ENCODE measurements at regions of chr2 and their contacts with region 1.

Region 1: DNA sequence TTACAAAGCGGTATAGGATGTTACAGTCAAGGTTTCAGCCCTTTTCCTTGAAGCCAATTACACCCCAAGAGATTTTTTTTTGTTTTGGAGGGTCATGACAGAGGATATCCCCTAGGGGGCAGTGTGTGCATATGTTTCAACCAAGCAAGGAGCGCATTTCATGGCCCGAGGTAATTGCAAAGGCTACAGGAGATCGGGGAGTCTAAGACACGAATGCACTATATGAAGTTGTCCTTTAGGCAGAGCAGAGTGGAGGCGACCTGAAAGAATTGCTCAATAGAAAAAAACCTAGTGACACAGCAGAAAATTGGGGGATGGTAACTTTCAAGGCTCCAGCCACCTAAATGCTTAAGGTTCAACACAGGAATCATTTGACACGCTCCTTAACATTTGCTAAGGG is 219.8 kb upstream of the PARD3B start:
- DNase-seq: peak; percentile 82
- H3K4me3 ChIP-seq: no peak overlapping the region
- H3K27ac ChIP-seq: no peak overlapping the region
- H3K4me1 ChIP-seq: peaks cover 6% of the 10 kb centered on the region; the same call in 1 of the 2 replicates
- H3K27me3 ChIP-seq: no peaks in the 10 kb centered on the region

Region 2: DNA sequence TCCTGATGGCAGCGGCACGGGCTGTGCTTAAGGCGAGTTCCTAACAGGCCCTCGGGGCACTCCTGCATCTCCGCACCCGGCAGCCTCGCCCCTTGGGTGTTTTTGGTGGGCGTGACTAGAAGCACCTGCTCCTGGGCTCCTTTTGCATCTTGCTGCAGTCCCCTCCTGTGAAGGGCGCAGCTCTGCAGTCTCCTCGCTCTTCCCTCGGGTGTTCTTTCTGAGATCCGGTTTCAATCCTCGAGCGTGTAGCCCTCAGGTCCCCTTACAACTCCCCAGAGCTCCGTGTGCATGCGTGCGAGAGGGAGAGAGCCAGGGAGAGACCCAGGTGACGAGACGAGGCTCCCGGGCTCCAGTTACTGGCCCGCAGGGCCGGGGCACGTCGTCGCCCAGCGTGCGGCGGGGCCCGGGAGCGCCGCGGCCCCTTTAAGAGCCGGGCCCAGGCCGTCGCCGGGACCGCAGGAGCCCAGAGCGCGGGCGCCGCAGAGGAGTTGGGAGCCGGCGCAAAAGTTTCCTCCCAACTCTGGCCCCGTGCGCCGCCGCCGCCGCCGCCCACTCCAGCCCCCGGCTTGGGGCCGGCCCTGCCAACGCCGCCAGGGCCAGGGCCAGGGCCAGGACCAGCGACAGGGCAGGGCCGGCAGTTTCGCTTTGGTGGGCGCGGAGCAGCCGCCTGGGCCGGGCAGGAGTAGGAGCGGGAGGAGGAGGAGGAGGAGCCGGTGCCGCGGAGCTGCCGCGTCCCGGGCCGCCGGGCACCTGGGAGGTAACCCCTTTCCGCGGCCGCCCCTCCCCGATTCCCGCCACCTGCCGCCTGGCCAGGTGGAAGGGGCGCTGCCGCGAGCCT is 219.8 kb after region 1 on chr2 and contains the start of gene PARD3B:
- in situ Hi-C with region 1: loop called (anchors 25 kb)
- DNase-seq: peak; percentile 88
- H3K4me3 ChIP-seq: peak within 1 kb of the TSS; percentile 78
- H3K27ac ChIP-seq: no peak within 1 kb of the TSS
- H3K4me1 ChIP-seq: peaks cover 12% of the 10 kb centered on the region
- H3K27me3 ChIP-seq: no peaks in the 10 kb centered on the region
- total RNA-seq, gene PARD3B: 6.9 and 8.1 TPM in 2 replicates

Region 3: DNA sequence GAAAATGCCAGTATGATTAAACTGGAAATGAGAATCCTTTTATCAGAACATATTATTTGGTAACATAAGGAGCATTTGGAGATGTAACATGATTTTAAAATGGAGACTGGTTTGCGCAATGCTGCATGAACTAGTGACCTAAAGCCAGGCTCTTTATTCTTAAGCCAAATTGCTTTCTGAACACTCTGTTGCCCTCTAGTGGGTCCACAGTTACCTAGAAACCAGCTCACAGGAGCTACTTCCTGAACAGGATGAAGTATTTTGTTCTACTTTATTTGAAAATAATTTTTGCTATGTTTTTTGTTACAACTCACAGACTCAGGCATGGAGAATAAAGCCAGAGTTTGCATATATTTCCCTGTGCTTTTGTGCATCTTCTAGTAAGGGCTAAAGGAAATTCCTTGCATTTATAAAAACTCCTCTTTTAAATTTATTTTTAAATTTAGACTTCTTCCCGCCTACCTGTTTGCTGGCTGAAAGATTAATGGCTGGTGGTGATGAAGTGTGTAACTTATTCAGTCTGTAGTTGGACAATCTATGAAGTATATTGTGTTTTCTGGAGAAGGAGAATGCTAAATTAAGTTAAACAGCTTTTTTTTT is 366.5 kb after region 1 on chr2:
- in situ Hi-C with region 1: loop called (anchors 10 kb)
- DNase-seq: peak; percentile 91
- H3K4me3 ChIP-seq: no peak overlapping the region
- H3K27ac ChIP-seq: no peak overlapping the region
- H3K4me1 ChIP-seq: peaks cover 27% of the 10 kb centered on the region
- H3K27me3 ChIP-seq: no peaks in the 10 kb centered on the region

Region 4: DNA sequence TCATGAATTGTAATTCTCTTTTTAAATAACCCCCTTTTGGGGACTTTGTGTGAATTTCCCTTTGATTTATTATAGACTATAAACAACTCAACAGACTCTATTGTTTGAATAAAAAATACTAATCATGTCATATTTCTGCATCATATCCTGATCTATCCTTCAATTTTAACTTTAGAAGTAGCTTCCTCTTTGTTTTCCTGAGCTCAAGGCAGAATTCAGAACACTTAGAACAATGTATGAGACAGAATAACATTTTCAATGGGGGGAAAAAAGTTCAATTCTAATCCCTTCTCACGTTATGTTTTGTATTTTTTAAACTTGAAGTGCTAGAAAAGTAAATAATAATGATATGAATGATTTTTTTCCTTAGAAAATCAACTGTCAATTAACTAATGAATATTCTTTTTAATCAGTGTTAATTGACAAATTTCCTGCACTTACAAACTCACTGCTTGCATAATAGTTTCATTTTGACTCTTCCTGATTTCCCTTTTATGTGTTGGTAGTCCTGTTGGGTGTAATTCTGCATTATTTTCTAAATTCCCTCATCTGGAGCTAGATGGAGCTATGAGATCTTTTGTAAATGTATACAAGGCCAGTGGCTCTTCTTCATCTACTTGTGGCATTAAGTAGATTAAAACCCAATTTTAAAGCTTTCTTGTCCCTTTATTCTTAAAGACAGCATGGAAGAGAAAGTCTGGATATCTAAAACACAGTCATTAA is 545.9 kb after region 1 on chr2:
- in situ Hi-C with region 1: no loop called
- DNase-seq: peak; percentile 63
- H3K4me3 ChIP-seq: no peak overlapping the region
- H3K27ac ChIP-seq: no peak overlapping the region
- H3K4me1 ChIP-seq: no peaks in the 10 kb centered on the region
- H3K27me3 ChIP-seq: no peaks in the 10 kb centered on the region

Region 5: GRCh38 chr2:205675861-205676516 is 1350.5 kb after region 1 on chr2:
- in situ Hi-C with region 1: loop called (anchors 10 kb)
- DNase-seq: peak; percentile 77
- H3K4me3 ChIP-seq: peak overlapping the region; percentile 51
- H3K27ac ChIP-seq: no peak overlapping the region
- H3K4me1 ChIP-seq: 0 out of 2 replicates have a peak, but pooled peaks cover 8% of the 10 kb centered on the region
- H3K27me3 ChIP-seq: no peaks in the 10 kb centered on the region